GM10248 (cell line): ENCODE measurements at regions of chr19 and their contacts with region 1.

Region 1: GRCh38 chr19:46624958-46625661 is at the start of gene PTGIR:
- DNase-seq: no peak
- CTCF ChIP-seq: no peak

Region 2: DNA sequence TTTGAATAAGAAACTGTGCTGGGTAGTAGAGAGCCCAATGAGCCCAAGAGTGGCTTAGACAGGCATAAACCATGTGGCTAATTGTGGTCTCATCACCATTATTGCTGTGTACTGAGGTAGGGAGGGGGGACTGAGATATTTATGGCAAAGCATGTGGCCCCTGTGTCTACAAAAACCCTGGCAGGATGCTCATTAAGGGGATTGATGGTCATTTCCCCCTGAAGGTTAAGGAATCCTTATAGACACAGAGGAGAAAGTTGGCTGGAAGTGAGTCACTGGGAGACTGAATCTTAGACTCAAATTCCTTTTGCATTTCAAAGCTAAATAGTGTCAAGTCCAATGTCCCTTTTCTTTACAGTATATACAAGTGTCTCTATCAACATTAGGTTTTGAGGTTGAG is 45.7 kb after region 1 on chr19:
- CTCF ChIA-PET with region 1: interaction called, 287 read pairs
- POLR2A ChIA-PET with region 1: interaction called, 12 read pairs
- DNase-seq: no peak
- CTCF ChIP-seq: no peak

Region 3: GRCh38 chr19:46721645-46722371 is 96.7 kb after region 1 on chr19:
- CTCF ChIA-PET with region 1: no interaction called
- POLR2A ChIA-PET with region 1: no interaction called
- DNase-seq: no peak
- CTCF ChIP-seq: peak; percentile 10